ENCODE measurements at regions of chr1 and their contacts with region 1.

Region 1: GRCh38 chr1:178542560-178543356 is 29.8 kb downstream of the TEX35 start:
- DNase-seq: peak; percentile 75
- H3K4me3 ChIP-seq: peak overlapping the region; percentile 72
- H3K27ac ChIP-seq: peak overlapping the region; percentile 78
- H3K27me3 ChIP-seq: no peaks in the 10 kb centered on the region
- CTCF ChIP-seq: peak; percentile 79

Region 2: GRCh38 chr1:178310685-178311105 is 232.1 kb before region 1 on chr1:
- CTCF ChIA-PET with region 1: interaction called, 16 read pairs
- POLR2A ChIA-PET with region 1: no interaction called
- DNase-seq: peak; percentile 21
- H3K4me3 ChIP-seq: no peak overlapping the region
- H3K27ac ChIP-seq: no peak overlapping the region
- H3K27me3 ChIP-seq: no peaks in the 10 kb centered on the region
- CTCF ChIP-seq: peak; percentile 75

Region 3: DNA sequence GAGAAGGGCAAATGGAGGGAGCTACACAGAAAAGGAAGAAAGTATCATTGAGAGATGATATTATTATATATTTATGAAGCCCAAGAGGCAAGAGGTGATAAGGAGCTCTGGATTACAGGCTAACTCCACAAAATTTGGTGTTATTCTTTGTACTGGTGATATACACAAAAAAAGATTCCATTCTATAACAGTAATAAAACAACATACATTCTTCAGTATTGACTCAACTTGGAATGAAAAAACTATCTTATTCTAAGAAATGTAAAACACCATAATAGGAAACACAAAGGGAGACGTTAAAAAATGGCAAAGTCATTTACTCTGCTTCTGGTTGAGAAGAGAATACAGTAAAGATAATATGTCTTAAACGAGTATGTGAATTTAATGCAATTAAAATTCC is 69.5 kb after region 1 on chr1:
- CTCF ChIA-PET with region 1: interaction called, 16 read pairs
- POLR2A ChIA-PET with region 1: interaction called, 13 read pairs
- DNase-seq: no peak
- H3K4me3 ChIP-seq: no peak overlapping the region
- H3K27ac ChIP-seq: peak overlapping the region; percentile 96
- H3K27me3 ChIP-seq: no peaks in the 10 kb centered on the region
- CTCF ChIP-seq: no peak

Region 4: GRCh38 chr1:178725603-178726517 is 183.1 kb after region 1 on chr1:
- CTCF ChIA-PET with region 1: interaction called, 16 read pairs
- POLR2A ChIA-PET with region 1: interaction called, 5 read pairs
- DNase-seq: no peak
- H3K4me3 ChIP-seq: peak overlapping the region; percentile 78
- H3K27ac ChIP-seq: peak overlapping the region; percentile 49
- H3K27me3 ChIP-seq: no peaks in the 10 kb centered on the region
- CTCF ChIP-seq: peak; percentile 15; the same call in 1 of the 2 replicates

Region 5: GRCh38 chr1:178752891-178753290 is 210.1 kb after region 1 on chr1:
- CTCF ChIA-PET with region 1: interaction called, 11 read pairs
- POLR2A ChIA-PET with region 1: no interaction called
- DNase-seq: no peak
- H3K4me3 ChIP-seq: no peak overlapping the region
- H3K27ac ChIP-seq: no peak overlapping the region
- H3K27me3 ChIP-seq: no peaks in the 10 kb centered on the region
- CTCF ChIP-seq: no peak

Region 6: GRCh38 chr1:178898401-178898800 is 355.6 kb after region 1 on chr1:
- CTCF ChIA-PET with region 1: interaction called, 11 read pairs
- POLR2A ChIA-PET with region 1: no interaction called
- DNase-seq: no peak
- H3K4me3 ChIP-seq: no peak overlapping the region
- H3K27ac ChIP-seq: no peak overlapping the region
- H3K27me3 ChIP-seq: no peaks in the 10 kb centered on the region
- CTCF ChIP-seq: no peak

Measured in AG04450 (cell line).